ENCODE measurements at regions of chr17 and their contacts with region 1.

Region 1: GRCh38 chr17:57939797-57940196 is 15.4 kb downstream of the CUEDC1 start:
- DNase-seq: peak; percentile 82 to 96 (median 96)
- H3K4me3 ChIP-seq: peak overlapping the region in 2 of 7 experiments; percentile 14 to 42
- H3K27ac ChIP-seq: no peak overlapping the region
- H3K4me1 ChIP-seq: peaks cover 5 to 49% (median 39%) of the 10 kb centered on the region in 4 experiments
- H3K27me3 ChIP-seq: peaks cover 0 to 2% (median 0%) of the 10 kb centered on the region in 5 experiments

Region 2: GRCh38 chr17:57923182-57923872 is 16.5 kb before region 1 on chr17:
- CTCF ChIA-PET with region 1: interaction called, 11 read pairs
- POLR2A ChIA-PET with region 1: no interaction called
- DNase-seq: no peak
- H3K4me3 ChIP-seq: no peak overlapping the region
- H3K27ac ChIP-seq: no peak overlapping the region
- H3K4me1 ChIP-seq: no peaks in the 10 kb centered on the region
- H3K27me3 ChIP-seq: peaks cover 0 to 2% (median 0%) of the 10 kb centered on the region in 5 experiments

Region 3: DNA sequence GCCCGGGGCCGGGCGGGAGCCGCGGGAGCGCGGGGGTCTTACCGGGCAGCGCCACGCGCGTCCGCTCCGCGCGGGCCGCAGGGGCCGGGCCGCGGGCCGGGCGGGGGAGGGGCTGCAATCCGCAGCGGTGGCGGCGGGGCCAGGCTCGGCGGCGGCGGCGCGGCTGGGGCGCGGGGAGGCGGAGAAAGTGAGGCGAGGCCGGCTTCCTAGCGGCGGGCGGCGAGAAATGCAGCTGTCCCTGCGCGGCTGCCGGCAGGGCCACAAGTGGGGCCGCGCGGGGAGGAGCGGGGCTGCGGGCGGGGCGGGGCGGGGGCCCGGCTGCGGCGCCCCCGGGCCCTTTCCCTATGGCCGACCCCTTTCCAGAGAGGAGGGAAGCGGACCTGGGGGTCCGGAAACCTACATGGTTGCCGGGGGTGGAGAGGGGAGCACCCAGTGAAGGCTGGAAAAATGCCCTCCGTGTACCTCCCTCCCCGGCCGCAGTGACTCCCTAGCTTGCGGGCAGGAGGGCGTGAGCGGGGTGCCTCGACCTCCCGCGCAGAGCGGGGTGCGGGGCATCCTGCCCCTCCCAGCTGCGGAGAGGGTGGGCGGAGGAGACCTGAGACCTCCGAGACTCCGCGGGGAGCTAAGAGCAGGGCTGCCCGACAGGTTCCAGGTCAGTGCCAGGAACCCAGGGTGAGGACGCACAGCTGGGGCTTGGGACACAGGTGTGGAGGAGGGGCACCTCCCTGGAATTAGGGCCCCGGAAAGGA is 15.6 kb after region 1 on chr17 and contains the start of gene CUEDC1:
- CTCF ChIA-PET with region 1: interaction called, 10 read pairs
- POLR2A ChIA-PET with region 1: interaction called, 5 read pairs
- DNase-seq: peak; percentile 29 to 63 (median 58)
- H3K4me3 ChIP-seq: peak within 1 kb of the TSS in 6 of 7 experiments; percentile 23 to 76 (median 58)
- H3K27ac ChIP-seq: no peak within 1 kb of the TSS
- H3K4me1 ChIP-seq: peaks cover 10 to 38% (median 29%) of the 10 kb centered on the region in 4 experiments
- H3K27me3 ChIP-seq: peaks cover 0 to 35% (median 10%) of the 10 kb centered on the region in 5 experiments

Region 4: GRCh38 chr17:58136669-58137283 is 197.0 kb after region 1 on chr17:
- CTCF ChIA-PET with region 1: no interaction called
- POLR2A ChIA-PET with region 1: no interaction called
- DNase-seq: no peak
- H3K4me3 ChIP-seq: no peak overlapping the region
- H3K27ac ChIP-seq: no peak overlapping the region
- H3K4me1 ChIP-seq: peaks cover 0 to 3% (median 0%) of the 10 kb centered on the region in 4 experiments
- H3K27me3 ChIP-seq: peaks cover 0 to 8% (median 4%) of the 10 kb centered on the region in 5 experiments

Measured in common myeloid progenitor, CD34-positive (primary cell).